GM12878 (cell line): ENCODE measurements at regions of chr3 and their contacts with region 1.

Region 1: DNA sequence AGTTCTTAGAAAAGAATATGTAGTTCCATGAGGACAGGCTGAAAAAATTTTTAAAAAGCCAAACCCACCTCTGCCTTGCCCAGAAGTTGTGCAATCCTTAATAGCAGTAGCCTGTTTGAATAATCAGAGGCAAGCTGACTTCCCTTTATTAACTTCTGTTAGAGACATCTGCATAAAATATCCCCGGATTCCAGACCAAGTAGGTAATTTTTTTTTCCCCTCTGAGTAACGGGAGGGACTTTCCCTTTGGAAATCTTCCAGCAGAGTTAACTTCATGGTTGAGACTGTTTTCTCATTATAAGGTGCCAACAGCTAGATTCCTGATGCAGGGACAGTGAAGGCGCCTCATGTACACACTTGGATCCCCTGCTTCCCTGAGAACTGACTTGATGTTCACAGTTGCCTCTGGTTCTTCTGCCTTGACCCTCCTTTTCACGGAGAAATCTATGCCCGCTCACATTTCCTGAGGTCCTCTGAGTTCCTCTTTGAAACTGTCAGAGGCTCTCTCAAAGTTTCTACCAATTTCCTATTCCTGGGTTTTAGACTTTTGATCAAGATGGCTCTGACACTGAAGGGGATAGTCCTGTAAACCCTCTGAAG is 227.6 kb upstream of the BHLHE40 start:
- DNase-seq: no peak
- ATAC-seq: peak; percentile 3
- H3K4me3 ChIP-seq: peak overlapping the region; percentile 65
- H3K27ac ChIP-seq: peak overlapping the region; percentile 95
- H3K4me1 ChIP-seq: peaks cover 71% of the 10 kb centered on the region
- H3K27me3 ChIP-seq: no peaks in the 10 kb centered on the region
- CTCF ChIP-seq: no peak
- EP300 ChIP-seq: peak in 1 of 2 experiments; percentile 4; a peak in 1 of 4 replicates
- POLR2A ChIP-seq: no peak
- RAD21 ChIP-seq: no peak

Region 2: GRCh38 chr3:4765212-4765611 is 13.6 kb after region 1 on chr3:
- CTCF ChIA-PET with region 1: interaction called, 4 read pairs
- POLR2A ChIA-PET with region 1: interaction called, 414 read pairs
- RAD21 ChIA-PET with region 1: interaction called, 33 read pairs
- SMC1A ChIA-PET with region 1: interaction called, 618 read pairs
- in situ Hi-C with region 1: no loop called
- intact Hi-C with region 1: no loop called
- DNase-seq: no peak
- ATAC-seq: no peak
- H3K4me3 ChIP-seq: no peak overlapping the region
- H3K27ac ChIP-seq: no peak overlapping the region
- H3K4me1 ChIP-seq: no peaks in the 10 kb centered on the region
- H3K27me3 ChIP-seq: no peaks in the 10 kb centered on the region
- CTCF ChIP-seq: no peak
- EP300 ChIP-seq: no peak
- POLR2A ChIP-seq: no peak
- RAD21 ChIP-seq: no peak

Region 3: DNA sequence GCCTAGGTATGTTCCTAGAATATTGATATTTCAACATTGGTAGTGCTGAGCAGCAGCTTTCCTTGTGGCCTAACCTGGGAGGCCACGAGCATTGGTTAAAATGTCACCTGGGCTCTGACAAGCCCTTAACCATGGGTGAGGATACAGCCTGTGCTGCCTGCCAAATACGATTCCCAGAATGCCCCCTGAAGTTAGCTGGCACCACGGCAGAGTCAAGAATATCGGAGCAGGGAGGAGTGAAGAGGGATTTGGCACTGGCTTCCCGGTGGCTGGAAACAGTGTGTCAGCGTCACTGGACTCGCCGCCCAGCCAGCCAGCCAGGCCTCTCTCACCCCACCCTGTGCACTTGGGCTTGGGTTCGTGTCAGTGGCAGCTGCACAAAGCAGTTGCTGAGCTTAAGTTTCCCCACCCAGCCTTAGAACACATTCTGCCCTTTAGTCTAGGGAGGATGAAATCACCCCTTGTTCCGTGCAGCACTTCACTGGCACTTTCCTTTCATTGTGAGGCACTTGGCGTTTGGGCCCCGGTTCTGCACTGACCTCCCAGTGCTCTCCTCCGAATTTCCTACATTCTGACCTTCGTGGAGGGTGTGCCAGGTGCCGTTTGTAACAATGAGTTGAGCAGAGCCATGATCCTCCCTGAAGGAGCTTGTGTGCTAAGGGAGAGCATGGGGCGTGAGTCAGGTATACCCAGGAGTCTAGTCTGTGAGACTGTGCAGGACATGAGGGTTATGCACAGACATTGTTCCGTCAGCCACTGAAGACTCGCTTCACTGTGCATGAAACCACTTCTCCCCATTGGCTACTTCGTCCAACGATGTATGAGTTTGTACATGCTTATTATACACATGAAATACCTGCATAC is 74.9 kb after region 1 on chr3:
- CTCF ChIA-PET with region 1: no interaction called
- POLR2A ChIA-PET with region 1: interaction called, 73 read pairs
- RAD21 ChIA-PET with region 1: interaction called, 8 read pairs
- SMC1A ChIA-PET with region 1: interaction called, 49 read pairs
- in situ Hi-C with region 1: no loop called
- intact Hi-C with region 1: loop called (anchors 2 kb)
- DNase-seq: no peak
- ATAC-seq: peak; percentile 9
- H3K4me3 ChIP-seq: no peak overlapping the region
- H3K27ac ChIP-seq: no peak overlapping the region
- H3K4me1 ChIP-seq: peaks cover 21% of the 10 kb centered on the region
- H3K27me3 ChIP-seq: no peaks in the 10 kb centered on the region
- CTCF ChIP-seq: no peak
- EP300 ChIP-seq: no peak
- POLR2A ChIP-seq: peak; percentile 31; the same call in 1 of the 2 replicates
- RAD21 ChIP-seq: no peak

Region 4: DNA sequence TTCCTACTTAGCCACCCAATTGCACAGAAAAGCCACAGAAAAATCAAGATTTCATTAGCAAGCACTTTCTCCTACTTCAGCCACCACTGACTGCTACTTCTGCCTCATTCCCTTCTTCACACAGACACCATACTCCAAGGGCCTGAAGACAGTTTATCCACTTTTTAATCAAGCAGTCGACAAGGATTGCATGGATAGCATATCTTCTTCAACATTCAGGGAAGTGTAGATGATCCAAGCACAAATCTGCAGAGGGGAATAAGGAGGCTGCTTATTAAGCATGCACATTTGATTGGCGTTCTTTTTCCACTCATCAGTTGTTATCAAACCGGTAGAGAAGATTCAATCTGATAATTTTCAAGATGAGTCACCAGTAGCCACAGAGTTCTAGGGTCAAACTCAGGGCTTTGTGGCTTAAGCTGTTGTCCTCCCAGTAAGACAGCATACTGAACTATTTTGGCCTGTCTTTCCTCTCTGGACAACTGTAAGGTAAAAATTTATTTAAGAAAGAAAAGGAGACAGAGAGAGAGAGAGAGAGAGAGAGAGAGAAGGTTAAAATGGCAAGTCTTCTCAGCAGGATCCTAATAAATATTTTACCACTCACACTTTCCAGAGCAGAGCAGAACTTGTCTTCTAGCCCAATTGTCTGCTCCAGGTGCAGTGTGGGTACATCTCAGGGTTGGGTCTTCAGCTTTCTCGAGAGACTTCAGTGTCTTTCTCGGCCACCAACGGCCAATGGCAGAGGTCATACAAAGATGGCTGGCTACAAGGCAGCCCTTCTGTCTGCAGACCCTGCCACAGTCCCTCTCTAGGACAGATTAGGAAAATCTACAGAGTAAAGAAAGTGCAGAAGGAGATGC is 147.1 kb after region 1 on chr3:
- CTCF ChIA-PET with region 1: no interaction called
- POLR2A ChIA-PET with region 1: no interaction called
- RAD21 ChIA-PET with region 1: interaction called, 3 read pairs
- SMC1A ChIA-PET with region 1: no interaction called
- in situ Hi-C with region 1: no loop called
- intact Hi-C with region 1: loop called (anchors 5 kb)
- DNase-seq: peak; percentile 53
- ATAC-seq: peak; percentile 97
- H3K4me3 ChIP-seq: no peak overlapping the region; the same call in 1 of the 2 replicates
- H3K27ac ChIP-seq: peak overlapping the region; percentile 28
- H3K4me1 ChIP-seq: peaks cover 16% of the 10 kb centered on the region
- H3K27me3 ChIP-seq: no peaks in the 10 kb centered on the region
- CTCF ChIP-seq: no peak
- EP300 ChIP-seq: peak; percentile 69 to 91; a peak in 3 of 4 replicates
- POLR2A ChIP-seq: no peak
- RAD21 ChIP-seq: no peak

Region 5: DNA sequence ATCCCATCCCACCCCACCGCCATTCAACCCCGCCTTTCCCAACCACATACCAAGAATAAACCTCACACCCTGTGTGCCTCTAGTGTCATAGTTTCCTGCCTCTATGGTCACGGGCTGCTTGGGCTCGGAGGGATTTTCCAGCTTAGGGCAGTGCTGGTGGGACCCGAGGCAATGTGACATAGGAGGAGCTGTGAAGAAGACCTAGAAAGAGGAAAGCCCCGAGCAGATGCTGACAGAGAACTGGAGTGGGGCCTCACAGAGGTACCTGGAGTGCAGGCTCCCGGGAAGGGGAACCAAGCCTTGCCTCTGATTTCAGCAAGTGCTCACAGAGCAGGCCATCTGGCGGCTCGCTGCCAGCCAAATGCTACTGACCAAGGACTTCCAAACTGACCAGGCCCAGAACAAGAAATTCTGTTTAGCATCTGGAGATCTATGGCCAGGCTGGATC is 255.2 kb after region 1 on chr3:
- CTCF ChIA-PET with region 1: no interaction called
- POLR2A ChIA-PET with region 1: interaction called, 5 read pairs
- RAD21 ChIA-PET with region 1: interaction called, 17 read pairs
- SMC1A ChIA-PET with region 1: interaction called, 8 read pairs
- in situ Hi-C with region 1: no loop called
- intact Hi-C with region 1: no loop called
- DNase-seq: peak; percentile 95
- ATAC-seq: peak; percentile 78
- H3K4me3 ChIP-seq: 0 out of 2 replicates have a peak overlapping the region, but pooled peaks have one; percentile 26
- H3K27ac ChIP-seq: peak overlapping the region; percentile 94
- H3K4me1 ChIP-seq: peaks cover 53% of the 10 kb centered on the region
- H3K27me3 ChIP-seq: no peaks in the 10 kb centered on the region
- CTCF ChIP-seq: peak in 1 of 3 experiments; percentile 24; a peak in 2 of 6 replicates
- EP300 ChIP-seq: peak; percentile 98 to 99
- POLR2A ChIP-seq: peak; percentile 69; the same call in 1 of the 2 replicates
- RAD21 ChIP-seq: peak; percentile 30; the same call in 1 of the 2 replicates

Region 6: GRCh38 chr3:5187156-5187919 is 435.7 kb after region 1 on chr3 and contains the start of gene EDEM1:
- CTCF ChIA-PET with region 1: no interaction called
- POLR2A ChIA-PET with region 1: interaction called, 7 read pairs
- RAD21 ChIA-PET with region 1: interaction called, 7 read pairs
- SMC1A ChIA-PET with region 1: no interaction called
- in situ Hi-C with region 1: no loop called
- intact Hi-C with region 1: loop called (anchors 5 kb)
- DNase-seq: peak; percentile 76
- ATAC-seq: peak; percentile 82
- H3K4me3 ChIP-seq: peak within 1 kb of the TSS; percentile 88
- H3K27ac ChIP-seq: peak within 1 kb of the TSS; percentile 96
- H3K4me1 ChIP-seq: peaks cover 29% of the 10 kb centered on the region
- H3K27me3 ChIP-seq: no peaks in the 10 kb centered on the region
- CTCF ChIP-seq: no peak
- EP300 ChIP-seq: no peak; a peak in 1 of 4 replicates
- POLR2A ChIP-seq: peak; percentile 78
- RAD21 ChIP-seq: no peak
- polyA plus RNA-seq, gene EDEM1: 18.9 to 48.0 TPM